ENCODE measurements at regions of chr1 and their contacts with region 1.

Region 1: GRCh38 chr1:119613769-119614720 is 34.0 kb downstream of the ZNF697 start:
- DNase-seq: peak; percentile 84 to 93 (median 87)
- H3K4me3 ChIP-seq: no peak overlapping the region
- H3K27ac ChIP-seq: no peak overlapping the region
- H3K4me1 ChIP-seq: peaks cover 0 to 6% of the 10 kb centered on the region in 2 donors
- H3K27me3 ChIP-seq: no peaks in the 10 kb centered on the region
- CTCF ChIP-seq: peak; percentile 79 to 91 (median 84)
- POLR2A ChIP-seq: no peak

Region 2: GRCh38 chr1:119431836-119432235 is 182.2 kb before region 1 on chr1:
- intact Hi-C with region 1: no loop called
- DNase-seq: peak; percentile 50 to 84 (median 80)
- H3K4me3 ChIP-seq: no peak overlapping the region
- H3K27ac ChIP-seq: peak overlapping the region in 4 of 5 donors; percentile 47 to 75 (median 64)
- H3K4me1 ChIP-seq: peaks cover 0 to 29% of the 10 kb centered on the region in 2 donors
- H3K27me3 ChIP-seq: no peaks in the 10 kb centered on the region
- CTCF ChIP-seq: no peak
- POLR2A ChIP-seq: no peak

Region 3: GRCh38 chr1:119662034-119662437 is 48.0 kb after region 1 on chr1:
- intact Hi-C with region 1: loop called (anchors 5 kb)
- DNase-seq: no peak
- H3K4me3 ChIP-seq: no peak overlapping the region
- H3K27ac ChIP-seq: no peak overlapping the region
- H3K4me1 ChIP-seq: no peaks in the 10 kb centered on the region
- H3K27me3 ChIP-seq: no peaks in the 10 kb centered on the region
- CTCF ChIP-seq: no peak
- POLR2A ChIP-seq: no peak

Region 4: GRCh38 chr1:119675349-119676345 is 61.6 kb after region 1 on chr1:
- intact Hi-C with region 1: loop called in 1 of 2 experiments (anchors 2 kb)
- DNase-seq: peak; percentile 78 to 95 (median 90)
- H3K4me3 ChIP-seq: peak overlapping the region in 1 of 4 donors; percentile 60
- H3K27ac ChIP-seq: peak overlapping the region in 1 of 5 donors; percentile 55
- H3K4me1 ChIP-seq: peaks cover 4 to 5% of the 10 kb centered on the region in 2 donors
- H3K27me3 ChIP-seq: no peaks in the 10 kb centered on the region
- CTCF ChIP-seq: peak; percentile 83 to 93 (median 91)
- POLR2A ChIP-seq: no peak

Measured in adrenal gland (tissue), 19 donors.